AG04450 (cell line): ENCODE measurements at regions of chr10 and their contacts with region 1.

Region 1: GRCh38 chr10:52368741-52369140 is 54.7 kb downstream of the DKK1 start:
- DNase-seq: no peak
- H3K4me3 ChIP-seq: no peak overlapping the region
- H3K27ac ChIP-seq: no peak overlapping the region
- H3K27me3 ChIP-seq: no peaks in the 10 kb centered on the region
- CTCF ChIP-seq: no peak

Region 2: DNA sequence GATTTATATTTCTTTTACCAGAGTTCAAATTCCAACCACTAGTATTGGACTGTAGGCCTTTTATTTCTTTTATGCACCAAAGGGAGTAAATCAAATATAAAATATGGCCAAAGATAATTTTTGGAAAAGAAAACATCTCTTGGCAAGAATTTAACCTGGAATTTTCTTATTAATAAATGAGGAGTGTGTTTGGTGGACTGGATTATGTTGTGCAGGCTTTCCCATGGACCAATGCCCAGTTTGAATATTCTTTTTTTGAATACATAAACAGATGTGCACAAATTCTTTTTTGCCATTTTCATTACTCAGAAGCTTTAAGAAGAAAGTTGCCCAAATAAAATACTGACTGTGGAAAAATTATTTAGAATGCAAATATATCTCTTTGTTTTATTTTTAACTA is 1316.6 kb before region 1 on chr10:
- CTCF ChIA-PET with region 1: no interaction called
- POLR2A ChIA-PET with region 1: interaction called, 10 read pairs
- DNase-seq: no peak
- H3K4me3 ChIP-seq: no peak overlapping the region
- H3K27ac ChIP-seq: no peak overlapping the region
- H3K27me3 ChIP-seq: no peaks in the 10 kb centered on the region
- CTCF ChIP-seq: no peak

Region 3: GRCh38 chr10:52343439-52343838 is 25.3 kb before region 1 on chr10:
- CTCF ChIA-PET with region 1: no interaction called
- POLR2A ChIA-PET with region 1: no interaction called
- DNase-seq: no peak
- H3K4me3 ChIP-seq: no peak overlapping the region
- H3K27ac ChIP-seq: no peak overlapping the region
- H3K27me3 ChIP-seq: no peaks in the 10 kb centered on the region
- CTCF ChIP-seq: no peak